SK-N-SH (cell line): ENCODE measurements at regions of chr9 and their contacts with region 1.

Region 1: DNA sequence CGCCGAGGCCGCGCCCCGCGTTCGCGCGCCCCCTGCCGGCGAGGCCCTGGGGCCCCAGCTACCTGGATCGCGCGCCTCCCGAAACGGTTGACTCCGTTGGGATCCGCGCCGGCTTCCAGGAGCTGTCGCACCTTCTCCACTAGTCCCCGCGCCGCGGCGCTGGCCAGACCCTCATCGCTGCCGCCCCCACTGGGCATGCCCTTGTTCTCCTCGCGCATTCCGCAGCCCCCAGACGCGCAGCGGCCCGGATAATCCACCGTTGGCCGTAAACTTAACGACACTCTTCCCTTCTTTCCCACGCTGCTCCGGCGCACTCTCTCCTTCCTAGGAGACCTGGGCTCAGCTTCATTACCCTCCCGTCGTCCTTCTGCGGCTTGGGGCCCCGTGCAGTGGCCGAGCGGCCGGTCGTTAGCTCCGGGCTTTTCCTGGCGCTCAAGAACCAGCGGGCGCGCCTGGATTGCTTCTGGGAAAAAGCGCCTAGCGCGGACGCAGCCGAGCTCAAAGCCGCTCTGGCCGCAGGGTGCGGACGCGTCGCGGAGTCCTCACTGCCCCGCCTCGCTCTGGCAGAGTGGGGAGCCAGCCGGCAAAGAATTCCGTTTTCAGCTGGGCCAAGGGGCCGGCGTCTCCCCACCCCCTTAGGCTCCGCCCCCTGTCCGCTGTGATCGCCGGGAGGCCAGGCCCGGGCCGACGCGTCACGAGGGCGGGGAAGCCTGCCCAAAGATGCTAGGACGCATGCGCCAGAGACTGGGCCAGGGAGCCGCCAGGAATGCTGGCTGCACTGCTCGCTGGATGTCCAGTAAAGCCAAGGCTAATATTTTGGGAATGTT is at the start of gene CDKN2B:
- DNase-seq: peak; percentile 97
- H3K4me3 ChIP-seq: peak within 1 kb of the TSS; percentile 79 to 82
- H3K27ac ChIP-seq: peak within 1 kb of the TSS; percentile 64 to 90
- H3K4me1 ChIP-seq: peaks cover 0 to 16% of the 10 kb centered on the region in 2 experiments; a peak in 2 of 4 replicates
- H3K27me3 ChIP-seq: no peaks in the 10 kb centered on the region; the same call in 1 of the 2 replicates
- CTCF ChIP-seq: peak; percentile 93
- EP300 ChIP-seq: no peak
- RAD21 ChIP-seq: peak; percentile 53
- polyA plus RNA-seq, gene CDKN2B: 6.3 and 6.4 TPM in 2 replicates

Region 2: DNA sequence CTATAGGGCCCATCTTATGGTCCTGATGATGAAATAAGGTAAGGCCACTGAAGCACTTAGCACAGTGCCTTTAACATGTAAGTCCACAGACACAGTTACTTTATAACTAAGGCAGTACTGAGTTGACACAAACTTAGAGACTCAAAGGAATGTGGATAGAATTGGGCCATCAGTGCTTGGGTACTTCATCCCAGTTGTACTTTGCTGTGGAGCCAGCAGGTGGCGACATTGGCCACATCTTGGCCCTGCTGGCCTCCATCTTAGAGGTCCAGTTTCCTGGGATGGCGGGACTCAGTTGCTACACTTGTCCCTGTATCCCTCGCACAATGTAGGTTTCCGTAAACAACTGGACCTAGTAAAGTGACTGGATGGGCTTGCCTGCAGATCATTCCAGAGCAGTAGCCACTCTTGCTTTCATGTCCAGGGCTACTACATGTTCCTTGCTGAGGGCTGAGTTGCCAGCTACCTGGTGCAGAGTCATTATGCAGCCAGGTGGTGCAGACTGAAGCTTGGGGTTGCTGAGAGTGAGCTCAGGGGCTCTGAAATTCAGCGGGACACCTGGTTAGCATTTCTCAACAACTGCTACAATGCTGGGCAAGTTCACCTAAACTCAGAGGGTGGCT is 195.9 kb before region 1 on chr9:
- CTCF ChIA-PET with region 1: interaction called, 109 read pairs
- POLR2A ChIA-PET with region 1: no interaction called
- DNase-seq: peak; percentile 69
- H3K4me3 ChIP-seq: no peak overlapping the region
- H3K27ac ChIP-seq: peak overlapping the region in 1 of 2 experiments; percentile 50; a peak in 2 of 4 replicates
- H3K4me1 ChIP-seq: peaks cover 3% of the 10 kb centered on the region in 2 experiments; a peak in 3 of 4 replicates
- H3K27me3 ChIP-seq: no peaks in the 10 kb centered on the region
- CTCF ChIP-seq: peak; percentile 87
- EP300 ChIP-seq: no peak
- RAD21 ChIP-seq: peak; percentile 86

Region 3: DNA sequence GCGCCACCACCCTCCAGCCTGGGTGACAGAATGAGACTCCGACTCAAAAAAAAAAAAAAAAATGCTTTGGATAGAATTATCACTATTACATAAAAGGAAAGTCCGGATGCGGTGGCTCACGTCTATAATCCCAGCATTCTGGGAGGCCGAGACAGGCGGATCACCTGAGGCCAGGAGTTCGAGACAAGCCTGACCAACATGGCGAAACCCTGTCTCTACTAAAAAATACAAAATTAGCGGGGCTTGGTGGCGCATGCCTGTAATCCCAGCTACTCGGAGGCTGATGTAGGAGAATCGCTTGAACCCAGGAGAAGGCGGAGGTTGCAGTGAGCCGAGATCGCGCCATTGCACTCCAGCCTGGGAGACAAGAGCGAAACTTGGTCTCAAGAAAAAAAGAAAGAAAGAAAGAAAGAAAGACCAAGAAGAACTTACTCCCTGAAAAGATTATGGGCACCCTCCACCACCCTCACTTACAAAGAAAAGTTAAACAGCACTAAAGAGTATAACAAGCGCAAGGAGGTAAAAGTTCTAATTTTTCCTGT is 32.5 kb before region 1 on chr9:
- CTCF ChIA-PET with region 1: interaction called, 20 read pairs
- POLR2A ChIA-PET with region 1: no interaction called
- DNase-seq: no peak
- H3K4me3 ChIP-seq: no peak overlapping the region
- H3K27ac ChIP-seq: no peak overlapping the region
- H3K4me1 ChIP-seq: peaks cover 0 to 4% of the 10 kb centered on the region in 2 experiments; a peak in 1 of 4 replicates
- H3K27me3 ChIP-seq: peaks cover 70% of the 10 kb centered on the region
- CTCF ChIP-seq: no peak
- EP300 ChIP-seq: no peak
- RAD21 ChIP-seq: no peak

Region 4: DNA sequence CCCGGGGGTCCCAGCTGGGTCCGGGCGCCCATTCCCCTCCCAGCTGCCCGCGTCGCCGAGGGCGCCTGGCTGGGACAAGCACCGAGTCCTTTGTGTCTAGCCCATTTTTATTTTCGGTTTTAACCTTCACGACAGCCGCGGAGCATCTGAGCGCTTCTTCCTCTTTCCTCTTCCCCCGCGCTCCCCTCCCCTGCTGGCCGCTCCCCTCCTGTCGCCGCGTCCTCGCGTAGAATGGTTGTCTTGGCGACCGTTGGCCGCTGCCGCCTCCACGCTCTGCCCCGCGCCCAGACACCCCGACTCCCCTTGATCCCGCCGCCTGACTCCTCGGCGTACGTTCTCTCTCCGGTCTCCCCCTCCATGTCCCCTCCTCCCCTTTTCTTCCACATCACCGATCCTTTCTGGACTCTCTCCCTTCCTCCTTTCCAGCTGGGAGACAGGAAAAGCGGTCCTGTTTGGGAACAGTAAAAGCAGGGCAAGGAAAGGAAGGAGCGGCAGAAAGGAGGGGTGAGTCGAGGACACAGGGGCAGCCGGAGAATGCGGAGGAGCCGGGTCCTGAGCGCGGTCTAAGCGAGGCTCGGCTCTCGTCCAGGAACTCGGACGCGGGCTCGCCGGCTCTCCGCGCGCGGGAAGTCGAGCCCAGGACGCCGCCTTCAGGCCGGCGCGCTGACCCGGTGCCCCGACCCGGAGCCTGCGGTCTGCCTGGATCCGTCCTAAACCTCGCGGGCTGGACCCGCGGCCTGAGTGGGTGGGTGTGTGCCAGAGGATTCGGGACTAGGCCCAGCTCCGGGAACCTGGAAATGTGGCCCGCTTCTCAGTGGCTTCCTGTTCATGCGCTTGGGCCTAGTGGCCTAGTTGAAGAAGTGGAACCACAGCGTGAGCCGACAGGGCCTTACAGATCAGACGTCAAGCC is 13.5 kb before region 1 on chr9:
- CTCF ChIA-PET with region 1: interaction called, 60 read pairs
- POLR2A ChIA-PET with region 1: interaction called, 3 read pairs
- DNase-seq: peak; percentile 79
- H3K4me3 ChIP-seq: peak overlapping the region; percentile 89 to 92
- H3K27ac ChIP-seq: peak overlapping the region; percentile 64 to 72; a peak in 3 of 4 replicates
- H3K4me1 ChIP-seq: peaks cover 0 to 6% of the 10 kb centered on the region in 2 experiments; a peak in 2 of 4 replicates
- H3K27me3 ChIP-seq: no peaks in the 10 kb centered on the region
- CTCF ChIP-seq: peak; percentile 28; the same call in 1 of the 2 replicates
- EP300 ChIP-seq: no peak
- RAD21 ChIP-seq: no peak

Region 5: GRCh38 chr9:22030101-22030598 is 21.2 kb after region 1 on chr9:
- CTCF ChIA-PET with region 1: interaction called, 13 read pairs
- POLR2A ChIA-PET with region 1: no interaction called
- DNase-seq: no peak
- H3K4me3 ChIP-seq: no peak overlapping the region
- H3K27ac ChIP-seq: peak overlapping the region in 1 of 2 experiments; percentile 24; a peak in 1 of 4 replicates
- H3K4me1 ChIP-seq: no peaks in the 10 kb centered on the region
- H3K27me3 ChIP-seq: no peaks in the 10 kb centered on the region
- CTCF ChIP-seq: no peak
- EP300 ChIP-seq: no peak
- RAD21 ChIP-seq: no peak

Region 6: DNA sequence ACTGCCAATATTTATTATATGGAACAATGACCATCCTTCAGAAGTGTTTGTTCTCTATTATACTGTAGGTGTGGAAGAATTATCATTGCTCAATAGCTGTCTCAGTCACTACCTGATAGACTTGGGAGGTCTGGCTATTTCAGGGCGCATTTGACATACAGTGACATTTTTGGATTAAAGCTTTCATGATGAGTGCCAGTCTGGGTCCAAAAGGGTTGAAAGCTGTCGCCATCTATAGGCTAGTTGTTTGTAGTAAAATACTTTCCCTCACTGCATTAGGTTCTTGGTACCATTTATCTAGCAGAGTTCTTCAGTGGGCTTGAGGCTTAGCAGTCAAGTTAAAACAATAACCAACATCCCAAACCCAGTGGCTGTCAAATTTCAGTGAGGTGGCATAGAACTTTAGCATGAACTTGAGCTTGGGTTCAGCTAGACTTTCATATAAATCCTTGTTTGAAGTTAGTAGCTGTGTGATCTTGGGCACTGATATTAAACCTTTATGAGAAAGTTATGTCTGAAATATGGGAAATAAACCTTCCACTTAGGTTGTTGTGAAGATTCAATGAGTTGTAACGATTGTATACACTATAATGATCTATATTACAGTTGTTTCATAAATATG is 110.7 kb after region 1 on chr9:
- CTCF ChIA-PET with region 1: interaction called, 11 read pairs
- POLR2A ChIA-PET with region 1: no interaction called
- DNase-seq: peak; percentile 8
- H3K4me3 ChIP-seq: no peak overlapping the region
- H3K27ac ChIP-seq: no peak overlapping the region
- H3K4me1 ChIP-seq: peaks cover 0 to 10% of the 10 kb centered on the region in 2 experiments; a peak in 2 of 4 replicates
- H3K27me3 ChIP-seq: peaks cover 11% of the 10 kb centered on the region; the same call in 1 of the 2 replicates
- CTCF ChIP-seq: peak; percentile 68
- EP300 ChIP-seq: no peak
- RAD21 ChIP-seq: peak; percentile 68